Ascending aorta (tissue), 2 donors: ENCODE measurements at regions of chr14 and their contacts with region 1.

Region 1: DNA sequence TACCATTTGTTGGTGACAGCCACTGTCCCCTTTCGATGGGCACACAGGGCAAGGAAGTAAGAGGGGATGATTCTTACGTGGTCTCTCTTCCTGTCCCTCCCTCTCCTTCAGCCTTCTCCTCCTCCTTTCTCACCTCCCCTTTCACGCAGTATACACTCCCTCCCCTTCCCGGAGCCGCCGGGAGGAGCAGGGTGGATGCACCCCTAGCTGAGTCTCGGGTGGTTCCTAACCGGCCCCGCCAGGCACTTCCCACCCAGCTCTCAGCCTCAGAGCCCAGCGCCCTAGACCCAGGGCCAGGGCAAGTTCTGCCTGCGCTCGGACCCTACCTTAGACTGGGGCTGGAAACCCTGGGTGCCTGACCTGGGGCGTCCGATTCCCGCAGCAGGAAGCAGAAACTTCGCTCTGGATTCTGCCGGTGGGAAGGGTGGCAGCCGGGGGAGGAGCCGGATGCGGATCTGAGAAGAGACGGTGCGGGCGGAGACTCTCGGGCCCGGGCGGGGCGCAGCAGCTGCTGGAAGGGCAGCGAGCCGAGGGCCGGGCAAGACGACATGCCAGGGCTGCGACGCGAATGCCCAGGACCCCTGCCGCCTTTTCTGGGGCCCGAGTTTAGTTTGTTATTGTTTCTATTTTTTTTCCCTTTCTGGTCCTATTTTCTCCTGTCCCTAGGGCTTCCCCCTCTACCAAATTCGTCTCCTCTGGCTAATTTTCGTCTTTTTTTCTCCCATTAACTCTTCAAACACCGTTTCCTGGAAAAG is at the start of gene TEP1:
- DNase-seq: peak; percentile 45 to 95
- H3K4me3 ChIP-seq: peak within 1 kb of the TSS; percentile 85 to 88
- H3K27ac ChIP-seq: peak within 1 kb of the TSS; percentile 97 to 98
- H3K4me1 ChIP-seq: peaks cover 0 to 5% of the 10 kb centered on the region in 2 donors
- H3K27me3 ChIP-seq: no peaks in the 10 kb centered on the region
- CTCF ChIP-seq: no peak
- total RNA-seq, gene TEP1: 43.7 TPM

Region 2: DNA sequence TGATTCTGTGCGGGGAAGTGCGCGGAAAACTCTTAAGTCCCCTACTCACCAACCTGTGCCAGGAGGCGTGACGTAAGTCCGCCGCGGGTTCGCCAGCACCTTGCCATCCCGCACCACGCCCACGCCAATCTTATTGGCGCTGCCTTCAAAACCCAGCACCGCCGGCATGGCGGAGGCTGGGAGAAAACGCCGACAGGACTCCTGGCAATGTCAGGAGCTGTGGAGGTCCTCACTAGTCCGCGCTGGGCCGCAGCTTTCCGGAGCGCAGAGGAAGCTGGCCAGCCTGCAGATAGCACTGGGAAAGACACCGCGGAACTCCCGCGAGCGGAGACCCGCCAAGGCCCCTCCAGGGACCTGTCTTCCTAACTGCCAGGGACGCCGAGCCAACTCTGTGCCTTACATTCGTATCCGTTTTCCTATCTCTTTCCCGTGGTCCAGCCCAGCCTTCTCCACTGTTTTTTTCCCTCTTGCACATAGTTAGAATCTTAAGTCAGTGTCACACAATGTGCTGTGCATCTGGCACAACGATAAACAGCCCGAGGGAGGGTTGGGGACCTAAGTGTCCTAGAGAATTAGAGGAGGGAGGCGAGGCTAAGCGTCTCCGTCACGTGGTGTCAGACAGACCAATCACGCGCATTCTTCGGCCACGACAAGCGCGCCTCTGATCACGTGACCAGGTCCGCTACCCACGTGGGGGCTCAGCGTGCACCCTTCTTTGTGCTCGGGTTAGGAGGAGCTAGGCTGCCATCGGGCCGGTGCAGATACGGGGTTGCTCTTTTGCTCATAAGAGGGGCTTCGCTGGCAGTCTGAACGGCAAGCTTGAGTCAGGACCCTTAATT is 41.5 kb after region 1 on chr14 and contains the starts of genes APEX1 and OSGEP:
- intact Hi-C with region 1: loop called (anchors 1 kb)
- DNase-seq: peak; percentile 93 to 99
- H3K4me3 ChIP-seq: peak within 1 kb of the TSS; percentile 83 to 99
- H3K27ac ChIP-seq: peak within 1 kb of the TSS; percentile 93 to 97
- H3K4me1 ChIP-seq: peaks cover 7 to 19% of the 10 kb centered on the region in 2 donors
- H3K27me3 ChIP-seq: no peaks in the 10 kb centered on the region
- CTCF ChIP-seq: no peak
- total RNA-seq, gene APEX1: 21.5 TPM
- total RNA-seq, gene OSGEP: 26.7 TPM

Region 3: DNA sequence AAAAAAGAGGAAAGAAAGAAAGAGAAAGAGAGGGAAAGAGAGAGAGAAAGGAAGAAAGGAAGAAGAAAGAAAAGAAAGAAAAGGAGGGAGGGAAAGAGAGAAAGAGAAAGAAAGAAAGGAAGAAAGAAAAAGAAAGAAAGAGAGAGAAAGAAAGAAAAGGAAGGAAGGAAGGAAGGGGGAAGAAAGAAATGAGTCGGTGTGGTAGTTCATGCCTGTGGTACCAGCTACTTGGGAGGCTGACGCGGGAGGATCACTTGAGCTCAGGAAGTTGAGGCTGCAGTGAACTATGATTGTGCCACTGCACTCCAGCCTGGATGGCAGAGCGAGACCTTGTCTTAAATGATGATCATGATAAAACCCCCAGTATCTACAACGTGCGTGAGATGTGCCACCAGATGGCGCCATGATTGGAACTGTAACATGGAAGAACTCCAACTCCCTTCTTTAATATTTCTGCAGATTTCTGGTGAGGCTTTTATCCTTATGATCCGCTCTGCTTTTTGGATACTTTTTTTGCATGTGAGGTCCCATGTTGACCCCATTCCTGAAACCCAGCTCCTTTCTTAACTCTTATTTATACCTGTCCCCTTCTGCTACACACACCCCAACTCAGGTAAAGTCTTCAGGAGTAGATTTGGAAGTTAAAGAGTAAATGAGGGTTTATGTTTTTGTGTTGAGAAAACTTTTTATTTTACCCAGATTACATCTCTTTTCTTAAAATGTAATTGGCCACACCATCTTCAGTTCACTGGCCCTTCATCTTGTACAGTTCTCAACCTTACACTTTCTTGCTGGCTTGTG is 117.7 kb after region 1 on chr14:
- intact Hi-C with region 1: loop called (anchors 10 kb)
- DNase-seq: peak; percentile 20 to 83
- H3K4me3 ChIP-seq: no peak overlapping the region
- H3K27ac ChIP-seq: no peak overlapping the region
- H3K4me1 ChIP-seq: no peaks in the 10 kb centered on the region
- H3K27me3 ChIP-seq: no peaks in the 10 kb centered on the region
- CTCF ChIP-seq: peak in 2 of 3 experiments; percentile 47 to 67